ENCODE measurements at regions of chr5 and their contacts with region 1.

Region 1: GRCh38 chr5:115544436-115545350 is at the start of gene FEM1C:
- DNase-seq: peak; percentile 95
- ATAC-seq: peak; percentile 93
- H3K4me3 ChIP-seq: peak within 1 kb of the TSS; percentile 83 to 95 (median 86)
- H3K4me3 Mint-ChIP-seq: peak within 1 kb of the TSS; percentile 94
- H3K27ac ChIP-seq: peak within 1 kb of the TSS; percentile 91 to 98
- H3K27ac Mint-ChIP-seq: peak within 1 kb of the TSS; percentile 98
- H3K4me1 ChIP-seq: peaks cover 30 to 38% of the 10 kb centered on the region in 2 donors
- H3K4me1 Mint-ChIP-seq: peaks cover 42% of the 10 kb centered on the region
- H3K27me3 ChIP-seq: no peaks in the 10 kb centered on the region
- H3K27me3 Mint-ChIP-seq: no peaks in the 10 kb centered on the region
- CTCF ChIP-seq: no peak
- total RNA-seq, gene FEM1C: 18.2 and 18.7 TPM in 2 replicates

Region 2: DNA sequence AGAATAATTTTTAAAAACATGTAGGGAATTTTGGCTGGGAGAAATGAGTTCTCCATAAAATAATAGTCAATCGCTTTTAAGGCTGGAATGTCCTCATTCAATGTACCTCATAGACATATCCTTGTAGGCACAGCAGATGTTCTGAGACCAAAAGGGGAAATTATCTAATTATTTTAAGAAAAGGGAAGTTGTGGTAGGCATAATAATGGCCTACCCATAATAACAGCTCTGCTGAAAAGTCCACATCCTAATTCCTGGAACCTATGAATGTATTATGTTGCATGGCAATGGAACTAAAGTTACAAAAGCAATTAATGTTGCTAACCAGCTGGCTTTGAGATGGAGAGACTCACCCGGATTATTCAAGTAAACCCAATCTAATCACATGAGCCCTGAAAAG is 591.1 kb before region 1 on chr5:
- CTCF ChIA-PET with region 1: no interaction called
- POLR2A ChIA-PET with region 1: no interaction called
- intact Hi-C with region 1: no loop called
- DNase-seq: peak; percentile 38
- ATAC-seq: peak; percentile 45
- H3K4me3 ChIP-seq: no peak overlapping the region
- H3K4me3 Mint-ChIP-seq: no peak overlapping the region
- H3K27ac ChIP-seq: peak overlapping the region in 1 of 2 donors; percentile 15
- H3K27ac Mint-ChIP-seq: no peak overlapping the region
- H3K4me1 ChIP-seq: peaks cover 7 to 30% of the 10 kb centered on the region in 2 donors
- H3K4me1 Mint-ChIP-seq: peaks cover 38% of the 10 kb centered on the region
- H3K27me3 ChIP-seq: no peaks in the 10 kb centered on the region
- H3K27me3 Mint-ChIP-seq: no peaks in the 10 kb centered on the region
- CTCF ChIP-seq: no peak

Region 3: DNA sequence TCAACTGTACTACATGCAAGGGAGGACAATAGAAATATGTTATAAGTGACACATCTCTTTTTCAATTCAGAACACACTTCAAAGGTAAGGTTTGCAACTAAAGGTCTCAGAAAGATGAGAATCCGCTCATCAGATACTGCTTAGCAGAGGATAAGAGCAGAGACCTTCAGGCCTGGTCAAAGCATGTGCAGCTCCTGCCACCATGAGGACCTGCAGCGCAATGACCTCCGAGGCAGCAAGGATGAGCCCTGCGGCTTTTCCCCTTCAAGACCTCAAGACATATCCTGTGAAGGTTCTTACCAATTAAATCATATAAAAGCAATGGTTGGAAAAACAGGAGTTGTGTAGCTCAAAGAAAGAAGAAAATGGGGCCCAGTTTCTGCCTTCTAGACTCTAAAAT is 510.8 kb before region 1 on chr5:
- CTCF ChIA-PET with region 1: no interaction called
- POLR2A ChIA-PET with region 1: no interaction called
- intact Hi-C with region 1: no loop called
- DNase-seq: peak; percentile 17
- ATAC-seq: no peak
- H3K4me3 ChIP-seq: no peak overlapping the region
- H3K4me3 Mint-ChIP-seq: no peak overlapping the region
- H3K27ac ChIP-seq: no peak overlapping the region
- H3K27ac Mint-ChIP-seq: no peak overlapping the region
- H3K4me1 ChIP-seq: no peaks in the 10 kb centered on the region
- H3K4me1 Mint-ChIP-seq: no peaks in the 10 kb centered on the region
- H3K27me3 ChIP-seq: no peaks in the 10 kb centered on the region
- H3K27me3 Mint-ChIP-seq: no peaks in the 10 kb centered on the region
- CTCF ChIP-seq: no peak

Region 4: GRCh38 chr5:115262321-115263077 is 282.2 kb before region 1 on chr5 and contains the start of gene PGGT1B:
- CTCF ChIA-PET with region 1: interaction called, 4 read pairs
- POLR2A ChIA-PET with region 1: interaction called, 3 read pairs
- intact Hi-C with region 1: loop called (anchors 2 kb)
- DNase-seq: peak; percentile 84
- ATAC-seq: peak; percentile 90
- H3K4me3 ChIP-seq: peak within 1 kb of the TSS; percentile 78 to 97 (median 87)
- H3K4me3 Mint-ChIP-seq: peak within 1 kb of the TSS; percentile 92
- H3K27ac ChIP-seq: peak within 1 kb of the TSS; percentile 88 to 92
- H3K27ac Mint-ChIP-seq: peak within 1 kb of the TSS; percentile 92
- H3K4me1 ChIP-seq: peaks cover 20 to 26% of the 10 kb centered on the region in 2 donors
- H3K4me1 Mint-ChIP-seq: peaks cover 49% of the 10 kb centered on the region
- H3K27me3 ChIP-seq: no peaks in the 10 kb centered on the region
- H3K27me3 Mint-ChIP-seq: no peaks in the 10 kb centered on the region
- CTCF ChIP-seq: no peak
- total RNA-seq, gene PGGT1B: 63.4 and 64.8 TPM in 2 replicates

Region 5: GRCh38 chr5:115579747-115580173 is 35.1 kb after region 1 on chr5:
- CTCF ChIA-PET with region 1: interaction called, 40 read pairs
- POLR2A ChIA-PET with region 1: no interaction called
- intact Hi-C with region 1: no loop called
- DNase-seq: peak; percentile 24
- ATAC-seq: peak; percentile 74
- H3K4me3 ChIP-seq: no peak overlapping the region
- H3K4me3 Mint-ChIP-seq: peak overlapping the region; percentile 32
- H3K27ac ChIP-seq: no peak overlapping the region
- H3K27ac Mint-ChIP-seq: peak overlapping the region; percentile 58
- H3K4me1 ChIP-seq: peaks cover 15 to 17% of the 10 kb centered on the region in 2 donors
- H3K4me1 Mint-ChIP-seq: peaks cover 33% of the 10 kb centered on the region
- H3K27me3 ChIP-seq: no peaks in the 10 kb centered on the region
- H3K27me3 Mint-ChIP-seq: no peaks in the 10 kb centered on the region
- CTCF ChIP-seq: no peak

Region 6: DNA sequence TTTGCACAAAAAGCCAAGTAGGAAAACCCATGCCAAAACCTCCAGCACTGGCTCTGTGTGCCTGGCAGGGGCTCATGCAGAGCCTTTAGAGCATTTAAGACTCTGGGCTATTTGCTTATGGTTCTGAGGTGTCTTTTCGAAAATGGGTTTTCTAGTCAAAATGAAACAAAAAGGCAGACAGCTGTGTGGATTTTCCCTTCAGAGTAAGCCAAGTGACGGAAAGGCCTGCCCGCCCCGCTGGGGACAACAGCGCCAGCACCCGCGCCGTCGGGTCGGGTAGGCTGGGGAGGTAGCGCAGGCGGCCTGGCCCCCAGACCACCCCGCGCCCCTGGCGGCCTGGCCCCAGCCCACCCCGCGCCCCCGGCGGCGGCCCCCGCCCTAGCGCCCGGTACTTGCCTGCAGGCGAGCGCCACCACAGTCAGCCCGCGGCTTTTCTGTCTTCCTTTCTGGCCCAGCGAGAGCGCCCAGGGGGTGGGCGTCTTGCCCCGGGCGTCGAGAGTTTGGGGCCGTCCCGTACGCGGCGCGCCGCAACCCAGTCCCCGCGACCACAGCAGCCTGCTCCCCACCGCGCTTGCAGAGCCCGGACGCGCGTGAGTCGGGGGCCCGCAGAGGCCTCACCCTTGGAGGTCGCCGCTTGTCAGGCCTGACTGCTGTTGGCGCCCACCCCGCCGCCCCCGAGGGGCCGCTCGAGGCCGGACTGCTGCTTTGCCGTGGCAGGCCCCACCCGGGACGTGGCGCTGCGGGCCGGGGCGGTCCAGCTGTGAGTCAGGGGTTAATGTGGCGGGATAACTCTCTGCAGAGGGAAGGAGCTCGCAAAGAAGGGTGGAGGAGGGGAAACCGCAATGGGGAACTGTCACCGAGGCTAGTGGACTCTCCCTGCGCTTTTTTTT is 57.3 kb after region 1 on chr5 and contains the start of gene TICAM2:
- CTCF ChIA-PET with region 1: interaction called, 5 read pairs
- POLR2A ChIA-PET with region 1: interaction called, 8 read pairs
- intact Hi-C with region 1: loop called (anchors 2 kb)
- DNase-seq: peak; percentile 86
- ATAC-seq: peak; percentile 80
- H3K4me3 ChIP-seq: peak within 1 kb of the TSS; percentile 51 to 87 (median 82)
- H3K4me3 Mint-ChIP-seq: peak within 1 kb of the TSS; percentile 94
- H3K27ac ChIP-seq: peak within 1 kb of the TSS; percentile 71 to 91
- H3K27ac Mint-ChIP-seq: peak within 1 kb of the TSS; percentile 98
- H3K4me1 ChIP-seq: peaks cover 38% of the 10 kb centered on the region in 2 donors
- H3K4me1 Mint-ChIP-seq: peaks cover 43% of the 10 kb centered on the region
- H3K27me3 ChIP-seq: no peaks in the 10 kb centered on the region
- H3K27me3 Mint-ChIP-seq: no peaks in the 10 kb centered on the region
- CTCF ChIP-seq: peak; percentile 54
- total RNA-seq, gene TICAM2: 4.9 and 5.4 TPM in 2 replicates

Region 7: DNA sequence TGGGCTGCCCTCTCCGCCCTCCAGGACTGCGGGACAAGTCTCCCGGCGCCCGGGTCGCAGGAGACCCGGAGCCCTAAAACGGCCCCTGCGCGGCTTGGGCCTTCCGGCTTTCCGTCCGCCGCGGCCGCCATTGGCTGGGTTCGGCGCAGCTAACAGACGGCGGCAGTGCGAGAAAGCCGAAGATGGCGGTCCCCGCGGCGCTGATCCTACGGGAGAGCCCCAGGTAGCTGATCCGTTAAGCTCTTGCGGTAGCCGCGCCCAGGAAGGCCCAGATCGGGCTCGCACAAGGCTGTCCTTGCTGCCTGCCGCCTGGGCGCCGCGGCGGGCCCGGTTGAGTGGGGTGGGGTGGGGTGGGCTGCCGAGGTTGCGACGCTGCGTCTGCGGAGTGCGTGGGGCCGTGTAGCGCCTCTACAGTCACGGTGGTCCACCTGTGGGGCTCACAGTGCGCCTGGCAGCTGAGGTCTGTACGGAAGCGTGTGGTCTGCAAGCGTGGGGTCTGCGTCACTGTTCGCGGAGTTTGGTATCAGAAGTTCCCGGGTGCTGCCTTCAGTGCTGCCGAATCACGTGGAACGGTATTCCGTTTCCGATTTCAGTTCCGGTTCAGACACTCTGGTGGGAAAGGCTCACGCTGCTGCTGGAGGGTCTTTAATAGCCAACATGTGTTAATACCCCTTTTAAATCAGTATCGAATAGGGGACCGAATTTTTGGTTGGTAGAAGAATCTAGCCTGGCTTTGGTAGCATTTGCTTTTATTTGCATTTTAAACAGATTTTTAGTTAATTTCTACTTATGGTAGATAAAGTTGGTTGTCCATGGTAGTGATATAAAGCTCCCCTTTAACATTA is 540.4 kb after region 1 on chr5 and contains the start of gene COMMD10:
- CTCF ChIA-PET with region 1: no interaction called
- POLR2A ChIA-PET with region 1: interaction called, 6 read pairs
- intact Hi-C with region 1: loop called (anchors 2 kb)
- DNase-seq: peak; percentile 95
- ATAC-seq: peak; percentile 89
- H3K4me3 ChIP-seq: peak within 1 kb of the TSS; percentile 67 to 90 (median 85)
- H3K4me3 Mint-ChIP-seq: peak within 1 kb of the TSS; percentile 96
- H3K27ac ChIP-seq: peak within 1 kb of the TSS; percentile 96
- H3K27ac Mint-ChIP-seq: peak within 1 kb of the TSS; percentile 99
- H3K4me1 ChIP-seq: peaks cover 16 to 19% of the 10 kb centered on the region in 2 donors
- H3K4me1 Mint-ChIP-seq: peaks cover 39% of the 10 kb centered on the region
- H3K27me3 ChIP-seq: no peaks in the 10 kb centered on the region
- H3K27me3 Mint-ChIP-seq: no peaks in the 10 kb centered on the region
- CTCF ChIP-seq: no peak
- total RNA-seq, gene COMMD10: 48.2 and 48.7 TPM in 2 replicates